CD4-positive, alpha-beta T cell (primary cell): ENCODE measurements at regions of chr1 and their contacts with region 1.

Region 1: DNA sequence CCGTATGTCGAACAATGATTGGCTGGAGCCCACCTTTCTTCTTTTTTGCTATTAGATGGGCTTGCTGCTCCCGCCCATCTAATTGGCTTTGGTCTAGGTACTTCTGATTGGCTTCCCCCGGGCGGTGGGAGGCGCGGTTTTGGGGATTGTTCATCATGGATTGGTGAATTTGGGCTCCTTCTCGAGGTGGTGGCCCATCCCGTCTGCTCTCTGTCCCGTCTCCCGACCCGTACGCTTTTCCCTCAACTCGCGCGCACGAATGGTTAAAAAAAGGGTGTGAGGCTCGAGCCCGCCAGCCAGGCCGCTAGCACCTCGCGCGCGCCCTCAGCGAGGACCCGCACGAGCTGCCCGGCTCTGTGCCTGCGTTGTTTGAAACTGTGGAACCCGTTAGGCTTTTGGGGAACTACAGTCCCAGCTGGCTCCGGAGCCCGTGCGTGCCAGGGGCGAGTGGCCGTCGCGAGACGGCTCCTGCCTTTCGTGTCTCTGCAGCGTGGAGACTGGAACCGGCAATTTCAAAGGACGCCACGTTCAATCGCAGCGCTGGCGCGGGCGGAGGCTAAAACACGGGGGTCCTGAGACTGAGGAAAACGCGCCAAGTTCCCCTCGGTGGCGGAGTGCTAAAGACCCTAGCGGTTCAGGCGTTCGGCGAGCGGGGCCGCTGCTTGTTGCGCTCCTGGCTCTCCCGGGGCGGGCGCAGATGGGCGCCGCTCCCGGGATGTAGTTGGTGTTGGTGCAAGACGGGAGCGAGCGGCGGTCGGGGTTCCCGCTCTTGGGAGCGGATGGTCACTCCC is at the start of gene USP1:
- DNase-seq: peak; percentile 94 to 99 (median 96)
- ATAC-seq: peak; percentile 84
- H3K4me3 ChIP-seq: peak within 1 kb of the TSS; percentile 93
- H3K4me3 Mint-ChIP-seq: peak within 1 kb of the TSS; percentile 97
- H3K27ac ChIP-seq: peak within 1 kb of the TSS; percentile 97 to 99
- H3K27ac Mint-ChIP-seq: peak within 1 kb of the TSS; percentile 99
- H3K4me1 ChIP-seq: peaks cover 20% of the 10 kb centered on the region
- H3K4me1 Mint-ChIP-seq: peaks cover 48% of the 10 kb centered on the region
- H3K27me3 ChIP-seq: no peaks in the 10 kb centered on the region
- H3K27me3 Mint-ChIP-seq: no peaks in the 10 kb centered on the region
- CTCF ChIP-seq: no peak
- total RNA-seq, gene USP1: 26.2 to 28.3 TPM

Region 2: DNA sequence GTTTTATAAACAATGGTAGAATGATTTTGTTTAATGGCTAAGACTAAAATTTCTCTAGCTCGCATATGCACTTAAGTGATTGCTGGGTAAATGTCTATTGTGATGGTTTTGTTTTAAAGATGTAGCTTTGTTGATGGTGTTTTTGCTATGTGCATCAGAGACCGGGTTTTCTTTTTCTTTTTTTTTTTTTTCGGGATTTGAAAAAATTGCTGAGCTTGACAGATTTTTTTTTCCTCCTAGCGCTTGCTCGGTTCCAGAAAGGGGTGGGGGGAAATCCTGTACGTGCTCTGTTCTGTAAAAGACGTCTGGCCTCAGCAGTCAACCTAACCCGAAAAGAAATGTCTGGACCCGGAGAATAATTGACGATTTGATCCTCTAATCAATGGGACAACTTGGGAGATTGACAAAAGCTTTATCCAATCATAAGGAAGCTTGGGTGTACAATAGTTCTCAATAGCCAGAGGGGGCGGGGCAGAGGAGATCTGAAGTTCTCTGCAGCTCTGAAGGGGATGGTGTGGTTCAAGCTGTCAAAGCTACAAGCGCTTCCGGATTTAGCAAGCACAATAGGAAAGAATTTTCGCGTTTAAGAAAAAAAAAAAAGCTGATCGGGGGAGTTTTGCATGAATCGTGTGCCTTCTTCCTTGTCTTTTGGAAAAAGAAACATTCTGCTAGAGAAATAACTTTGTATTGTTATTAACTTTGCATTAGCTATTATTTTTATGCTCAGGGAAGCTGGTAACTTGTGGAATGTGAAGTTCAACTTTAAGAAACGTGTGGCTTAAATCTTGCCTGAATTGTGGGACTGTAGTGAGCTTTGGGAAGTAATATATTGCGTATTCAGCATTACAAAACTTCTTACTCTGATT is 1358.8 kb before region 1 on chr1:
- CTCF ChIA-PET with region 1: no interaction called
- POLR2A ChIA-PET with region 1: interaction called, 17 read pairs
- intact Hi-C with region 1: loop called in 1 of 2 experiments (anchors 5 kb)
- DNase-seq: peak; percentile 76 to 99 (median 88)
- ATAC-seq: peak; percentile 71
- H3K4me3 ChIP-seq: peak overlapping the region; percentile 57
- H3K4me3 Mint-ChIP-seq: peak overlapping the region; percentile 88
- H3K27ac ChIP-seq: peak overlapping the region; percentile 29 to 78
- H3K27ac Mint-ChIP-seq: peak overlapping the region; percentile 87
- H3K4me1 ChIP-seq: peaks cover 39% of the 10 kb centered on the region
- H3K4me1 Mint-ChIP-seq: peaks cover 50% of the 10 kb centered on the region
- H3K27me3 ChIP-seq: no peaks in the 10 kb centered on the region
- H3K27me3 Mint-ChIP-seq: no peaks in the 10 kb centered on the region
- CTCF ChIP-seq: no peak

Region 3: GRCh38 chr1:61741711-61742619 is 694.7 kb before region 1 on chr1 and contains the start of gene PATJ:
- CTCF ChIA-PET with region 1: no interaction called
- POLR2A ChIA-PET with region 1: no interaction called
- intact Hi-C with region 1: loop called in 1 of 2 experiments (anchors 5 kb)
- DNase-seq: peak; percentile 40 to 87 (median 66)
- ATAC-seq: peak; percentile 91
- H3K4me3 ChIP-seq: peak within 1 kb of the TSS; percentile 78
- H3K4me3 Mint-ChIP-seq: peak within 1 kb of the TSS; percentile 97
- H3K27ac ChIP-seq: peak within 1 kb of the TSS; percentile 56 to 62
- H3K27ac Mint-ChIP-seq: peak within 1 kb of the TSS; percentile 94
- H3K4me1 ChIP-seq: peaks cover 23% of the 10 kb centered on the region
- H3K4me1 Mint-ChIP-seq: peaks cover 31% of the 10 kb centered on the region
- H3K27me3 ChIP-seq: no peaks in the 10 kb centered on the region
- H3K27me3 Mint-ChIP-seq: no peaks in the 10 kb centered on the region
- CTCF ChIP-seq: no peak
- total RNA-seq, gene PATJ: 50.4 to 54.1 TPM

Region 4: DNA sequence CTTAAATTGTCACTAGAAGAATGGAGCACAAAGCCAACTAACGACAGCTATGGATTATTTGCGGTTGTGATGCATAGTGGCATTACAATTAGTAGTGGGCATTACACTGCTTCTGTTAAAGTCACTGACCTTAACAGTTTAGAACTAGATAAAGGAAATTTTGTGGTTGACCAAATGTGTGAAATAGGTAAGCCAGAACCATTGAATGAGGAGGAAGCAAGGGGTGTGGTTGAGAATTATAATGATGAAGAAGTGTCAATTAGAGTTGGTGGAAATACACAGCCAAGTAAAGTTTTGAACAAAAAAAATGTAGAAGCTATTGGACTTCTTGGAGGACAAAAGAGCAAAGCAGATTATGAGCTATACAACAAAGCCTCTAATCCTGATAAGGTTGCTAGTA is 13.6 kb after region 1 on chr1:
- CTCF ChIA-PET with region 1: interaction called, 3 read pairs
- POLR2A ChIA-PET with region 1: interaction called, 13 read pairs
- intact Hi-C with region 1: no loop called
- DNase-seq: peak in 1 of 14 experiments; percentile 44
- ATAC-seq: no peak
- H3K4me3 ChIP-seq: no peak overlapping the region
- H3K4me3 Mint-ChIP-seq: no peak overlapping the region
- H3K27ac ChIP-seq: no peak overlapping the region
- H3K27ac Mint-ChIP-seq: no peak overlapping the region
- H3K4me1 ChIP-seq: no peaks in the 10 kb centered on the region
- H3K4me1 Mint-ChIP-seq: peaks cover 6% of the 10 kb centered on the region
- H3K27me3 ChIP-seq: no peaks in the 10 kb centered on the region
- H3K27me3 Mint-ChIP-seq: no peaks in the 10 kb centered on the region
- CTCF ChIP-seq: no peak

Region 5: DNA sequence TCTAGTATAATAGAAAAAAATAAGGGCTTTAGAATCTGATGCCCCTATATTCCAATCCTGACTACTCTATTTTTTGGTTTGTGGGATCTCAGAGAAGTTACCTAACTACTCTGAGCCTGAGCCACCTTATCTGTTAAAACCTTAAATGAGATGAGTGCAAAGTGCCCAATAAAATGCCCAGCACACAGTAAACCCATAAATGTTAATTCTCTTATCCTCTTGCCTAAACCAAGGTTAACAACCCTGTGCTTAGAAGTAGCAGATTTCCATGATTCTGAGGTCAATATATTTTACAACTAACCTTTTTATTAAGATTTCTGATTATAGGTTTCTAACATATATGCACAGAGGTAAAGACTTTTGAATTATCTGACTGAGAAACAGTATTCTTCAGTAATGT is 215.7 kb after region 1 on chr1:
- CTCF ChIA-PET with region 1: no interaction called
- POLR2A ChIA-PET with region 1: no interaction called
- intact Hi-C with region 1: no loop called
- DNase-seq: no peak
- ATAC-seq: no peak
- H3K4me3 ChIP-seq: no peak overlapping the region
- H3K4me3 Mint-ChIP-seq: no peak overlapping the region
- H3K27ac ChIP-seq: no peak overlapping the region
- H3K27ac Mint-ChIP-seq: no peak overlapping the region
- H3K4me1 ChIP-seq: no peaks in the 10 kb centered on the region
- H3K4me1 Mint-ChIP-seq: no peaks in the 10 kb centered on the region
- H3K27me3 ChIP-seq: no peaks in the 10 kb centered on the region
- H3K27me3 Mint-ChIP-seq: no peaks in the 10 kb centered on the region
- CTCF ChIP-seq: no peak

Region 6: DNA sequence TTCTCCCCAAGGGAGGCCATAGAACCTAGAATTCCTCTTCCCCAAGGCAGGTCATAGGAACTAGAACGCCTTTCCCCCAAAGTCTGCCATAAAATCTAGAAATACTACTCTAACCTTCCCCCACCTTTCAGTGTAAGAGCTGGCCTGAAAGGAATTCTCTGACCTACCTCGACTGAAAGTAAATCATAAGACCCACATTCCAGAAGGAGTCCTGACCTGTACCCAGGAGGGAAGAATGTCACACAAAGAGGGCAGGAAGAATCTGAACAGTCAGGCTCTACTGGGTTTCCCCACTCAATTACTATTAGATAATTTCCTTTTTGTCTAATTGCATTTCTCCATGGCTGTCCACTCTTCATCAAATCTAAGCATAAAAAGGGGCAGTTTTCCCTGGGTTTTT is 341.6 kb after region 1 on chr1:
- CTCF ChIA-PET with region 1: no interaction called
- POLR2A ChIA-PET with region 1: interaction called, 29 read pairs
- intact Hi-C with region 1: loop called (anchors 1 to 2 kb)
- DNase-seq: no peak
- ATAC-seq: no peak
- H3K4me3 ChIP-seq: no peak overlapping the region
- H3K4me3 Mint-ChIP-seq: no peak overlapping the region
- H3K27ac ChIP-seq: no peak overlapping the region
- H3K27ac Mint-ChIP-seq: no peak overlapping the region
- H3K4me1 ChIP-seq: peaks cover 3% of the 10 kb centered on the region
- H3K4me1 Mint-ChIP-seq: no peaks in the 10 kb centered on the region
- H3K27me3 ChIP-seq: no peaks in the 10 kb centered on the region
- H3K27me3 Mint-ChIP-seq: peaks cover 4% of the 10 kb centered on the region
- CTCF ChIP-seq: no peak

Region 7: GRCh38 chr1:63367215-63368103 is 930.8 kb after region 1 on chr1 and contains the start of gene ALG6:
- CTCF ChIA-PET with region 1: no interaction called
- POLR2A ChIA-PET with region 1: interaction called, 6 read pairs
- intact Hi-C with region 1: loop called in 1 of 2 experiments (anchors 5 kb)
- DNase-seq: peak; percentile 64 to 94 (median 88)
- ATAC-seq: peak; percentile 79
- H3K4me3 ChIP-seq: peak within 1 kb of the TSS; percentile 98
- H3K4me3 Mint-ChIP-seq: peak within 1 kb of the TSS; percentile 97
- H3K27ac ChIP-seq: peak within 1 kb of the TSS; percentile 52 to 60
- H3K27ac Mint-ChIP-seq: peak within 1 kb of the TSS; percentile 87
- H3K4me1 ChIP-seq: peaks cover 20% of the 10 kb centered on the region
- H3K4me1 Mint-ChIP-seq: peaks cover 34% of the 10 kb centered on the region
- H3K27me3 ChIP-seq: peaks cover 0 to 2% of the 10 kb centered on the region in 2 experiments
- H3K27me3 Mint-ChIP-seq: peaks cover 7% of the 10 kb centered on the region
- CTCF ChIP-seq: peak; percentile 12
- total RNA-seq, gene ALG6: 10.6 to 11.2 TPM

Region 8: GRCh38 chr1:63593303-63593885 is 1156.7 kb after region 1 on chr1 and contains the start of gene PGM1:
- CTCF ChIA-PET with region 1: no interaction called
- POLR2A ChIA-PET with region 1: interaction called, 10 read pairs
- intact Hi-C with region 1: no loop called
- DNase-seq: peak; percentile 55 to 91 (median 73)
- ATAC-seq: peak; percentile 77
- H3K4me3 ChIP-seq: peak within 1 kb of the TSS; percentile 87
- H3K4me3 Mint-ChIP-seq: peak within 1 kb of the TSS; percentile 99
- H3K27ac ChIP-seq: peak within 1 kb of the TSS; percentile 82 to 87
- H3K27ac Mint-ChIP-seq: peak within 1 kb of the TSS; percentile 99
- H3K4me1 ChIP-seq: peaks cover 21% of the 10 kb centered on the region
- H3K4me1 Mint-ChIP-seq: peaks cover 45% of the 10 kb centered on the region
- H3K27me3 ChIP-seq: no peaks in the 10 kb centered on the region
- H3K27me3 Mint-ChIP-seq: no peaks in the 10 kb centered on the region
- CTCF ChIP-seq: no peak
- total RNA-seq, gene PGM1: 5.4 to 5.6 TPM